Activated CD4-positive, alpha-beta T cell treated with anti-CD3 and anti-CD28 coated beads, Interleukin-2, amount 10 ng/mL, durations not matched to agents 24 days and 14 days (primary cell): ENCODE measurements at regions of chr6 and their contacts with region 1.

Region 1: GRCh38 chr6:129709769-129710449 is at the start of gene ARHGAP18:
- DNase-seq: peak; percentile 93
- H3K4me3 Mint-ChIP-seq: peak within 1 kb of the TSS; percentile 99
- H3K27ac Mint-ChIP-seq: peak within 1 kb of the TSS; percentile 91
- H3K4me1 Mint-ChIP-seq: peaks cover 46% of the 10 kb centered on the region
- H3K27me3 Mint-ChIP-seq: peaks cover 3% of the 10 kb centered on the region
- total RNA-seq, gene ARHGAP18: 3.2 and 3.8 TPM in 2 replicates

Region 2: DNA sequence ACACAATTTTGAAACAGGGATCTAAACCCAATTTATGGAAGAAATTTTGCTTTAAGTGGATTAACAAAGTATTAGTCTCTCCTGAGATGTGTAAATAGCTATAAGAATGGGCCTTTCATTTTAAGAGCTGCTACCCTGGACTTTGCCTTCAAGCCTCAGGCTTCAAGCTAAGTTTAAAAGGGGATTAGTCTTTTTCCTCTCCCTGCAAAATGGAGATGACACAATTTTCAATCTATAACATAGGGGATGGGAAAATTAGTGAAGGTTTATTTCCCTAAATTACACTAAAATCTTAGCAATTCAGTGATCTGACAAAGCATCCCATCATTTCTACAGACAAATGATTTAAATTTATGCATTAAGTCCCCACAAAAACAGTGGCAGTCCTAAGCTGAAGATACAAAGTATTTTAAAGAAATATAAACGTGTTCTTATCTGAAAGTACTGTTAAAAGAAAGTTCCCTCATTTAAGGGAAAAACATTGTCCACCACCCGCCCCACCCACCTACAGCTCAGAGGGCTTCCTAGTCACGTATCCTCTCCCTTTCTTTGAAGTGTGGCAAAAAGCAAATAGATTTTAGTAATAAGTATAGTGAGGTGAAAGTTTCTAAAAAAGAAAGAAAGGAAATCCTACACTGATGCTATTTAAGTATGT is 14.4 kb before region 1 on chr6:
- intact Hi-C with region 1: loop called (anchors 1 kb)
- DNase-seq: peak; percentile 64
- H3K4me3 Mint-ChIP-seq: peak overlapping the region; percentile 59
- H3K27ac Mint-ChIP-seq: peak overlapping the region; percentile 21
- H3K4me1 Mint-ChIP-seq: peaks cover 57% of the 10 kb centered on the region
- H3K27me3 Mint-ChIP-seq: no peaks in the 10 kb centered on the region